ENCODE measurements at regions of chr1 and their contacts with region 1.

Region 1: DNA sequence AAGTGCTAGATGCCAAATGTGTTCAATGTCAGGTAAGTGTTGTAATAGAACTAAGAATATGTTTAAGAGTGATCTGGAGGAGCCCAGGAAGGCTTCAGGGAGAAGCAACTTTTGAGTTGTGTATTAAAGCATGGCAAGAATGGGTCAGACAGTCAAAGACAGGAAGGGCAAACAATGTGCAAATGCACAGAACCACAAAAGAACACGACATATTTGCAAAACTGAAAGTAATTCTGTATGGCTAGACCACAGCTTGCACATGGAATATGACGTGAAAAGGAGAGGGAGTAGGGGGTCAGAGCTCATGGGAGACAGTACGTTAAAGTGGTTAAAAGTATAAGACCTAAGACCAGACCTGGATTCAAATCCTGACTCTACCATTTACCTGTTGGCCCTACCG is 7.1 kb upstream of the SORT1 start:
- DNase-seq: no peak
- ATAC-seq: no peak
- H3K4me3 ChIP-seq: no peak overlapping the region
- H3K27ac ChIP-seq: no peak overlapping the region
- H3K4me1 ChIP-seq: peaks cover 0 to 16% (median 8%) of the 10 kb centered on the region in 9 donors
- H3K27me3 ChIP-seq: no peaks in the 10 kb centered on the region
- CTCF ChIP-seq: no peak

Region 2: DNA sequence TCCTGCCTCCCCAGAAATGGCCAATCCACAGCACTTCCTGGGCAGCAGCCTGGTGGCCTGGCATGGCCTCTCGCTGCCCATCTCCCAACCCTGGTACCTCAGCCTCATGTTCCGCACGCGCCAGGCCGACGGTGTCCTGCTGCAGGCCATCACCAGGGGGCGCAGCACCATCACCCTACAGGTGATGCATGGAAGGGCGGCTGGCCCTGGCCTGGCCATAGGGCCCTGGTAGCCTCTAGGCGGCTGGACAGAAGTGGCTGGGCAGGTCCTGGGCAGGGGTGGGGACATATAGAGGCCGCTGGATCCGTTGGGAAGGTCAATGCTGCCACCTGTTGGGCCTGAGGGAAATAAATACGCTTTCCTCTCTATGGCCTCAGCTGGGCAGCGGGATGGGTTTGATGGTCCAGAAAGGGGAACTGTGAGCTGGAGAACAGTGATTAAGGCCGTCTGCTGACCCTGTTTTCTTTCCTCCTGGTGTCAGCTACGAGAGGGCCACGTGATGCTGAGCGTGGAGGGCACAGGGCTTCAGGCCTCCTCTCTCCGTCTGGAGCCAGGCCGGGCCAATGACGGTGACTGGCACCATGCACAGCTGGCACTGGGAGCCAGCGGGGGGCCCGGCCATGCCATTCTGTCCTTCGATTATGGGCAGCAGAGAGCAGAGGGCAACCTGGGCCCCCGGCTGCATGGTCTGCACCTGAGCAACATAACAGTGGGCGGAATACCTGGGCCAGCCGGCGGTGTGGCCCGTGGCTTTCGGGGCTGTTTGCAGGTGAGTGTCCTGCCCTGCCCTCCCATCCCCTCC is 141.0 kb before region 1 on chr1:
- intact Hi-C with region 1: loop called in 1 of 10 experiments (anchors 5 kb)
- DNase-seq: peak; percentile 73 to 85
- ATAC-seq: peak; percentile 80 to 90 (median 82)
- H3K4me3 ChIP-seq: no peak overlapping the region
- H3K27ac ChIP-seq: no peak overlapping the region
- H3K4me1 ChIP-seq: peaks cover 0 to 11% (median 0%) of the 10 kb centered on the region in 9 donors
- H3K27me3 ChIP-seq: no peaks in the 10 kb centered on the region
- CTCF ChIP-seq: peak; percentile 88 to 96 (median 93)

Region 3: GRCh38 chr1:109277434-109278204 is 127.2 kb before region 1 on chr1:
- intact Hi-C with region 1: loop called in 1 of 10 experiments (anchors 5 kb)
- DNase-seq: peak; percentile 78 to 81
- ATAC-seq: peak; percentile 65 to 84 (median 78)
- H3K4me3 ChIP-seq: no peak overlapping the region
- H3K27ac ChIP-seq: no peak overlapping the region
- H3K4me1 ChIP-seq: peaks cover 0 to 29% (median 7%) of the 10 kb centered on the region in 9 donors
- H3K27me3 ChIP-seq: no peaks in the 10 kb centered on the region
- CTCF ChIP-seq: peak; percentile 86 to 96 (median 89)

Region 4: DNA sequence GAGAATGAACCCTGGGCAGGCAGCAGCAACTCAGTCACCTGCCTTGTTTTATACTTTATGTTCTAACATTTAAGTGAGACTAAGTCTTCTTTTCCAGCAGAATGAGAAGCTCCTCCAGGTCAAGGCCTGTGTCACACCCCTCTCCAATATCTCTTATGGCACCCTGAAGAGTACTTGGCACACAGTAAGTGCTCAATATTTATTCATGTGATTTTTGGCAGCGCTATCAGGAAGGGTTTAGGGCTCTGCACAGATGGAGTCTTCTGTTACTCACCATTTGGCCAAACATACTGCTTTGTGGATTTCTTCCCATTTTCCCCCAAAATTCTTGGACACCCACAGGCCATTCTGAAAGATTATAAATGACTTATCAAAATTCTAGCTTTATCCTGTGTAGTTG is 54.2 kb before region 1 on chr1:
- intact Hi-C with region 1: loop called in 1 of 10 experiments (anchors 5 kb)
- DNase-seq: no peak
- ATAC-seq: no peak
- H3K4me3 ChIP-seq: no peak overlapping the region
- H3K27ac ChIP-seq: no peak overlapping the region
- H3K4me1 ChIP-seq: peaks cover 0 to 17% (median 0%) of the 10 kb centered on the region in 9 donors
- H3K27me3 ChIP-seq: no peaks in the 10 kb centered on the region
- CTCF ChIP-seq: no peak

Region 5: GRCh38 chr1:109579491-109579890 is 174.7 kb after region 1 on chr1:
- intact Hi-C with region 1: no loop called
- DNase-seq: peak in 1 of 2 donors; percentile 19
- ATAC-seq: peak in 6 of 8 donors; percentile 48 to 86 (median 74)
- H3K4me3 ChIP-seq: no peak overlapping the region
- H3K27ac ChIP-seq: no peak overlapping the region
- H3K4me1 ChIP-seq: peaks cover 0 to 23% (median 11%) of the 10 kb centered on the region in 9 donors
- H3K27me3 ChIP-seq: no peaks in the 10 kb centered on the region
- CTCF ChIP-seq: no peak